Tibial artery (tissue), 4 donors: ENCODE measurements at regions of chr5 and their contacts with region 1.

Region 1: GRCh38 chr5:148443998-148444397 is 60.2 kb downstream of the FBXO38 start:
- DNase-seq: no peak
- H3K4me3 ChIP-seq: no peak overlapping the region
- H3K27ac ChIP-seq: no peak overlapping the region
- H3K4me1 ChIP-seq: peaks cover 0 to 5% (median 0%) of the 10 kb centered on the region in 4 donors
- H3K27me3 ChIP-seq: no peaks in the 10 kb centered on the region
- CTCF ChIP-seq: peak; percentile 69 to 90

Region 2: DNA sequence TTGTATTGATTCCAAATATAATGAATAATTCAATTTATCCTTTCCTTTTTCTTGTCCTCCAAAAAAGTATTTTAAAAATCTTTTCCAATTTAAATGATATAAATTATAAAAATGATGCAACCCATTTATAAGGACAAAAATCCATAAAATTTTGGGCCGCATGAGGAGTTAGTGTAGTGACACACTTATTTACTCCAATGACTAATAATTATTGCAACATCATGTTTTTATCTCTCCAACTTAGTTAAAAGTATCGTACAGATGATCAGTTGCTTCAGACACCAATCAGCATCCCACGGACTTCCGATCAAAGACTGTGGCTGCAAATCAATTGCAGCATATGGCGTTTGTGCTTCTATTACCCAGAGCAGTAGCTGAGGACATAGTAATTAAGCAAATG is 151.7 kb after region 1 on chr5:
- intact Hi-C with region 1: no loop called
- DNase-seq: no peak
- H3K4me3 ChIP-seq: no peak overlapping the region
- H3K27ac ChIP-seq: no peak overlapping the region
- H3K4me1 ChIP-seq: no peaks in the 10 kb centered on the region
- H3K27me3 ChIP-seq: no peaks in the 10 kb centered on the region
- CTCF ChIP-seq: no peak

Region 3: DNA sequence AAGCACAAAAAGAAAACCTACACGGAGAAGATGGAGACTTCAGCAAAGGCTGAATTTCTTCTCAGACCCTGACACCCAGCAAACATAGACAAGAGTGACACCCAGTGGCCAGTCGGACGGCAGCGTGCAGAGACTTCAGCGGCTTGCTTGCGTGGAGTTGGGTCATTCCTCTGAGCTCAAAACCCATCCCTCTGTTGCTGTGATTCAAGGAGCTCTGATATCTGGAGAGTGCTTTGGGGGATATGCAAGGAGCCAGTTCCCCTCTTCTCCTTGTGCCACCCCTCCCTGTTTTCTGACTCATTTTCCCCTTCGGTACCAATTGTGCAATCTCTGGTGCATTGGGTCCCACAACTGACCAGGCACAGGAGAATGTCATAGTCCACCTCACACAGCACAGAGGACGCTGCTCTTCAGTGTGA is 591.4 kb after region 1 on chr5:
- intact Hi-C with region 1: loop called (anchors 10 kb)
- DNase-seq: peak; percentile 72 to 76
- H3K4me3 ChIP-seq: no peak overlapping the region
- H3K27ac ChIP-seq: no peak overlapping the region
- H3K4me1 ChIP-seq: no peaks in the 10 kb centered on the region
- H3K27me3 ChIP-seq: no peaks in the 10 kb centered on the region
- CTCF ChIP-seq: peak; percentile 72 to 73